Endothelial cell of umbilical vein (primary cell): ENCODE measurements at regions of chr12 and their contacts with region 1.

Region 1: GRCh38 chr12:94571556-94571955 is 78.8 kb downstream of the TMCC3 start:
- DNase-seq: peak; percentile 94
- H3K4me3 ChIP-seq: no peak overlapping the region
- H3K27ac ChIP-seq: peak overlapping the region; percentile 82
- H3K4me1 ChIP-seq: peaks cover 29% of the 10 kb centered on the region
- H3K27me3 ChIP-seq: no peaks in the 10 kb centered on the region
- CTCF ChIP-seq: no peak
- POLR2A ChIP-seq: no peak

Region 2: DNA sequence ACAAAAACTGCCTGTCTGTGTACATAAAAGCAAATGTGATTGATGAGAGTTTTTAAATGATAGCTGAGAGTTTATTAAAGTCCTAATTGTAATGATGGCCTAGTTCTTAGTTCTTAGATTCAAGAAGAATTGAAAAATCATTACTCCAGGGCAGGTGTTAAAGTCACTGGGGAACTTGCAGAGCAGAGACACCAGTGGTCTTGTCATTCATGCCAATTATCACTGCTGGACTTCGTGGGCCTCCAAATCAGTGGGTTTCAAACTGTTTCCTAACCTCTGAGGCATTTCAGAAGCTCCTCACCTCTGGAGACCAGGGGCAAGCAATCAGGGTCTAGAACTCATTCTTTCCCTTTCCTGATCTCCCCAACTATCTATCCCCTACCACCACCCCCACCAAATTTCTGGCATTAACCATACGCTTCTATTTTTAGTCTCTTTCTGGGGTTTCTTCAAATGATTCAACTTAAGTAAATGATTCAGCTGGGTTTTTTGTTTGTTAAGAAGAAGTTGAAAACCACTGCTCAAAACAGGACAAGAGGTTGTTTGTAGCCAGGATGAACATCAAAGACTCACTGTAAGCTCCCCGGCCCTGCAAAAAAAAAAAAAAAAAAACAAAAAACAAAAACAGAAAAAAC is 192.0 kb before region 1 on chr12:
- CTCF ChIA-PET with region 1: no interaction called
- POLR2A ChIA-PET with region 1: no interaction called
- dilution Hi-C with region 1: no loop called
- intact Hi-C with region 1: no loop called
- DNase-seq: no peak
- H3K4me3 ChIP-seq: no peak overlapping the region
- H3K27ac ChIP-seq: no peak overlapping the region
- H3K4me1 ChIP-seq: no peaks in the 10 kb centered on the region
- H3K27me3 ChIP-seq: no peaks in the 10 kb centered on the region
- CTCF ChIP-seq: no peak
- POLR2A ChIP-seq: no peak

Region 3: DNA sequence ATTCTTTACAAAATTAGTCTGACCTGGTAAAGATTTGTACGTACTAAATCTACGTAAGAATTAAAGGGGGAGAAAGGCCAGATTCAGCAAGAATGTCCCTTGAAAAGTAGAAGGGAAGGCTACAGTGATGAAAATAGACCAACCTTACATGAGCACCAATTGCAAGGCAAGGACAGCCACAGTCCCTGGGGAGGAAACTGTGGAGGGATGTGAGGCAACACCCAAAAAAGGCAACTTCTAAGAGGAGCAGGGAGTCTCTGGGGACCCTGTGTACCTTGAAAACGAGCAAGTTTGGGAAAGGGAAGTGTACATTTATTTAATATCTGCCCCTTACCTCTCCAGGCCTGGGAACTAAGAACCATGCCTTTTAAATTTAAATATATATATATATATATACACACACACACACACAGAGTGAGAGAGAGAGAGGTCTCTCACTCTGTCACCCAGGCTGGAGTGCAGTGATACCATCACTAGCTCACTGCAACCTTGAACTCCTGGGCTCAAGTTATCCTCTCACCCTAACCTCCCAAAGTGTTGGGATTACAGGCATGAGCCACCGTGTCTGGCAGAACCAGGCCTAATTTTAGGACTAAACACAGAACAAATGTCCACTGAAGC is 22.4 kb after region 1 on chr12:
- CTCF ChIA-PET with region 1: no interaction called
- POLR2A ChIA-PET with region 1: no interaction called
- dilution Hi-C with region 1: no loop called
- intact Hi-C with region 1: loop called (anchors 1 kb)
- DNase-seq: no peak
- H3K4me3 ChIP-seq: no peak overlapping the region
- H3K27ac ChIP-seq: peak overlapping the region; percentile 0
- H3K4me1 ChIP-seq: peaks cover 57% of the 10 kb centered on the region
- H3K27me3 ChIP-seq: no peaks in the 10 kb centered on the region
- CTCF ChIP-seq: no peak
- POLR2A ChIP-seq: no peak

Region 4: DNA sequence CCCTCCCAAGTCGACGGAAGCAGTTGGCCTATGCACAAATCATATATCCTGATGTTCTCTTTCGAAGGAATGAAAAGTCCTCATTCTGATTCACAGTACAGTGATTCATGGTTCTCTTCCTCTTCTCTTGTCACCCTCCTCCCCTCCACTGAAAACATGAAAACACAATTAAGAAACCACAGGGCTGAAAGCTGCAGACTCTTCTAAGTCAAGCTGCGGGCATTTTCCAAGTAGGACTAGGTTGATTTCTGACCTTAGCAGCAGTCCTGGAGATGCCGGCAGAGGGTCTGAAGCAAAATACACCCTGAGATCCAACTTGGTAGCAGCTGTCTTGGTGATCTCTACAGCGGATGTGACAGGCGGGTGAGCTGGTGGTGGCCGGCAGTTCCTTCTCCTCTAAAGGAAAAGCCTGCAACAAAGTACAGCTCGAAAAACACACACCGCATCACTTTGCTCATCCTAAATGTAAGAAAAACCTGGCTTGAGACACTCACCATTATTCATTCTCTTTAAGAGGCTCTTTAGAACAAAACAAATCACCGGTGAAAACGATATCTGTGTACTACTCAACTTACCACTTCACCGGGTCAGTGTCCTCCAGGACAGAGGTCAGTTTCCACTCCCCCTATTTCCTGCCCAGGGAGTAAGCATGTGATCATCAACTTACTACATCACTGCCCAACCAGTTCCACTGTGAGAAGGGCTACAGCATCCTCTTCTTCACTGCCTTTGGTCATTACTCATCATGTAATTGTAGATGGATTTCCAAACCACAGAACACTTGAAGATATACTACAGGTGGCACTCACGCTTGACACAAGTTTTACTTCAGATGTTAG is 72.8 kb after region 1 on chr12:
- CTCF ChIA-PET with region 1: interaction called, 3 read pairs
- POLR2A ChIA-PET with region 1: no interaction called
- dilution Hi-C with region 1: no loop called
- intact Hi-C with region 1: loop called (anchors 1 kb)
- DNase-seq: peak; percentile 83
- H3K4me3 ChIP-seq: peak overlapping the region in 1 of 3 experiments; percentile 34
- H3K27ac ChIP-seq: peak overlapping the region; percentile 79
- H3K4me1 ChIP-seq: peaks cover 43% of the 10 kb centered on the region
- H3K27me3 ChIP-seq: no peaks in the 10 kb centered on the region
- CTCF ChIP-seq: no peak
- POLR2A ChIP-seq: no peak

Region 5: GRCh38 chr12:94689002-94689645 is 117.6 kb after region 1 on chr12:
- CTCF ChIA-PET with region 1: interaction called, 4 read pairs
- POLR2A ChIA-PET with region 1: no interaction called
- dilution Hi-C with region 1: no loop called
- intact Hi-C with region 1: loop called (anchors 1 kb)
- DNase-seq: peak; percentile 74
- H3K4me3 ChIP-seq: no peak overlapping the region
- H3K27ac ChIP-seq: peak overlapping the region; percentile 54
- H3K4me1 ChIP-seq: peaks cover 20% of the 10 kb centered on the region
- H3K27me3 ChIP-seq: no peaks in the 10 kb centered on the region
- CTCF ChIP-seq: no peak
- POLR2A ChIP-seq: no peak